HEK293T (cell line): ENCODE measurements at regions of chr1 and their contacts with region 1.

Region 1: GRCh38 chr1:39788758-39789570 is at the start of gene BMP8B:
- DNase-seq: peak; percentile 76

Region 2: DNA sequence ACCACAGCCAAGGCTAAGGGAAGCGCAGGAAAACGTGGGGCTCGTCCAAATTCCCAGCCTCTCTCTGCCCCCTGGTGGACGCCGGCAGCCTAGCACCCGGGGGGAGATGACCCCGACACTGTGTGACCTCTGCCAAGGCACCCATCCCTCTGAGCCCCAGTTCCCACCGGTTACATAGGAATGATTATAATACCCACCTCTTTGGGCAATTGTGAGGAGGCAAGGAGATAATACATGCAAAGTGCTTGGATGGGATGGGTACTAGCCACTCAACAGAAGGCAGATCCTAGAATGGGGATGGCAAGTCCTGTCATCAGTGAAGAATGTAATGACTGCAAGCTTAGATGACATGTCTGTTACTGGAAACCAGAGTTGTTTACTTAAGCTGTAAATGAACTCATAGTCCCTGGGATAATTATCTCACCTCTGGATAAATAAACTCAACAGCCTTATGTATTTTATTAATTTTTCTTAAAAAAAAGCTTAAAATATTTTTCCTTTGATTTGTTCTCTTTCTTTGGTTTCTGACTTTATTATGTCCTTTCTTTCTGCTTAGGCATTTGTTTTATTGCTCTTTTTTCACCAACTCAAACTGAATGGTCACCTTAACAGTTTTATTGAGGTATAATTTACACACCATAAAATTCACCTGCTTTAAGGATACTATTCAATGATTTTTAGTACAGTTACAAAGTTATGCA is 11.0 kb after region 1 on chr1:
- CTCF ChIA-PET with region 1: interaction called, 10 read pairs
- POLR2A ChIA-PET with region 1: interaction called, 20 read pairs
- DNase-seq: peak; percentile 80

Region 3: DNA sequence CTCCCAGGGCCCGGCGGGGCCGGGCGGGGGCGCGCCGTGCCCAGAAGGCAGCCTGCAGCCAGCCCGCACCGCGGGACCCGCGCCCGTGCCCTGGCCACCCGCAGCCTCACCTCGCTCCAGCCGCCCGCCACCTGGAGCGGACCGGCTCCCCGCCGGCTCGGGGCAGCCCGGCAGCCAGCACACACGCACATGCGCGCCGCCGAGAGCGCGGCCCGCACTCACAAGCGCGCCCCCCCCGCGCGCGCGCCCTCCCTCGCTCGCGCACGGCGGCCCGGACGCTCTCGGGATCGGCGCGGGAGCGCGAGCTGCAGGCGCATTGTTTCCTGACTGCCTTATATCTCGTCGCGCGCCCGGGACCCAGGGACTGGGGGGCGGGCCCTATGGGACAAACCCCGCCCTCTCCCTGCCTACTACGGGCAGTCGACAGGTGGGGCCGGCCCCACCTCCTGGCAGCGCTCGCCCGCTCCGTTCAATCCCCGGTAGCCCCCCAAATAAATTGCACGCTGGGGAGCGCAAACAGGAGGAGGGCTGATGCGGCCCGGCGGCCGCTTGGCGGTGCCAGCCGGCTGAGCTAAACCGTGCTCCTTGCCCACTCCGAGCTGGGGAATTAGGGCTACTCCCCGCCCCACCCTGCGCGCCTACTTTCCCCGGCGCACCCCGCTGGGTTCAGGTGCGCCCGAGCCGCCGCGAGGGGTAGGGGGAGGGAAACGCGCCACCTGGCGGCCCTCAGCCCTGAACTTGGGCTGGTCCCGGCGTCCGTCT is 112.9 kb after region 1 on chr1 and contains the start of gene MYCL:
- CTCF ChIA-PET with region 1: no interaction called
- POLR2A ChIA-PET with region 1: no interaction called
- DNase-seq: peak; percentile 86